ENCODE measurements at regions of chr12 and their contacts with region 1.

Region 1: DNA sequence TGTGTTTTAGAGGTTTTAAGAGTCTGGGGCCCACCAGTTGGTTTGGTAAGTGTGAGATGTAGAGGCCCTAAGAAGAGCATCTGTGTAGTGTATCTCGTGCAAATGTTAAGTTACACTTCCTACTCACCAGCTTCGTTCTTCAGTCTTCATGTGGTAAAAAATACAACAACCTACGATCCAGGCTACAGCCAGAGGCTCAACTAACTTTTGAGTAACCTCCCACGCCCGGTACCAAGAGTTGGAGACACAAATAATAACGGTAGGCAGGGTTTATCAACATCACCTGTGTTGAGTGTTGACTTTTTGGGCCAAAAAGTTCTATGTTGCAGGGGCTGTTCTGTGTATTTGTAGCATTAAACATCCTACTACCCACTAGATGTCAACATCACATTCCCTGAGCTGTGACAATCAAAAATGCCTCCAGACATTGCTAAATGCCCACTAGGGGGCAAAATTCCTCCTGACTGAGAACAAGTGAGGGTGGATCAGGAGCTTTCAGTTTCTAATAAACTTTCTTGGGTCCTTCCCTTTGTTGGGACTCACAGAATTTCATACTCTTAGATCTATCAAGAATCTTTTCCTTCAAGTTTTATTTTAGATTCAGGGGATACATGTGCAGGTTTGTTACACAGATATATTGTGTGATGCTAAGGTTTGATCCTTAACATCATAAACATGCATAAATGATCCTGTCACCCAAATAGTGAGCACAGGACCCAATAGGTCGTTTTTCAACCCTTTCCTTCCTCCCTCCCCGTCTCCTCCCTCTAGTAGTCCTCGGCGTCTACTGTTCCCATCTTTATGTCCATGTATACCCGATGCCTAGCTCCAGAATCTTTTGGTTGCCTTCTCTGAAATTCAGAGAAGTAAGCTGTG is 94.7 kb downstream of the SLC2A13 start:
- DNase-seq: peak; percentile 76
- ATAC-seq: peak; percentile 92
- H3K4me3 Mint-ChIP-seq: peak overlapping the region; percentile 56
- H3K27ac Mint-ChIP-seq: peak overlapping the region; percentile 4
- H3K4me1 Mint-ChIP-seq: peaks cover 26% of the 10 kb centered on the region
- H3K27me3 Mint-ChIP-seq: no peaks in the 10 kb centered on the region

Region 2: GRCh38 chr12:39990122-39991101 is 20.7 kb before region 1 on chr12:
- CTCF ChIA-PET with region 1: interaction called, 21 read pairs
- POLR2A ChIA-PET with region 1: no interaction called
- DNase-seq: peak; percentile 73
- ATAC-seq: peak; percentile 91
- H3K4me3 Mint-ChIP-seq: no peak overlapping the region
- H3K27ac Mint-ChIP-seq: no peak overlapping the region
- H3K4me1 Mint-ChIP-seq: no peaks in the 10 kb centered on the region
- H3K27me3 Mint-ChIP-seq: no peaks in the 10 kb centered on the region

Region 3: GRCh38 chr12:40028301-40028700 is 17.2 kb after region 1 on chr12:
- CTCF ChIA-PET with region 1: interaction called, 24 read pairs
- POLR2A ChIA-PET with region 1: no interaction called
- DNase-seq: no peak
- ATAC-seq: no peak
- H3K4me3 Mint-ChIP-seq: no peak overlapping the region
- H3K27ac Mint-ChIP-seq: no peak overlapping the region
- H3K4me1 Mint-ChIP-seq: peaks cover 3% of the 10 kb centered on the region
- H3K27me3 Mint-ChIP-seq: no peaks in the 10 kb centered on the region

Region 4: DNA sequence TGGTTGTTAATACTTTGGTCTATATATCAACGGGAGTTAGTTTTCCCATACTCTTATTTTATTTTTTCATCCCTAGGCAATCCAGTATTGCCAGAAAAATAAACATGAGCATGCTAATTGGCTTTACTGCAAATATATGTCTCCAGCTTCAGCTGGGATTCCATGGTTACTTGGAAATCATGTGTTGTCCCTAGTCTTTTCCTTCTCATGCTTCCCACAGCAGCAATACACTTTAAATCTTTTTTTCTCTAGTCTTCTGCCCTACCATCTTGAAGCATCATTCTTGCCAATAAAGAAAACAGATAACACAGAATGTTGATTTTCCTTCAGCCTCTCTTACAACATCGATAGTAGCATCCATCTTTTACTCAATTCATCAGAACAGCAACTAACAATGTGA is 34.5 kb after region 1 on chr12:
- CTCF ChIA-PET with region 1: no interaction called
- POLR2A ChIA-PET with region 1: no interaction called
- DNase-seq: no peak
- ATAC-seq: no peak
- H3K4me3 Mint-ChIP-seq: no peak overlapping the region
- H3K27ac Mint-ChIP-seq: no peak overlapping the region
- H3K4me1 Mint-ChIP-seq: no peaks in the 10 kb centered on the region
- H3K27me3 Mint-ChIP-seq: no peaks in the 10 kb centered on the region

Region 5: DNA sequence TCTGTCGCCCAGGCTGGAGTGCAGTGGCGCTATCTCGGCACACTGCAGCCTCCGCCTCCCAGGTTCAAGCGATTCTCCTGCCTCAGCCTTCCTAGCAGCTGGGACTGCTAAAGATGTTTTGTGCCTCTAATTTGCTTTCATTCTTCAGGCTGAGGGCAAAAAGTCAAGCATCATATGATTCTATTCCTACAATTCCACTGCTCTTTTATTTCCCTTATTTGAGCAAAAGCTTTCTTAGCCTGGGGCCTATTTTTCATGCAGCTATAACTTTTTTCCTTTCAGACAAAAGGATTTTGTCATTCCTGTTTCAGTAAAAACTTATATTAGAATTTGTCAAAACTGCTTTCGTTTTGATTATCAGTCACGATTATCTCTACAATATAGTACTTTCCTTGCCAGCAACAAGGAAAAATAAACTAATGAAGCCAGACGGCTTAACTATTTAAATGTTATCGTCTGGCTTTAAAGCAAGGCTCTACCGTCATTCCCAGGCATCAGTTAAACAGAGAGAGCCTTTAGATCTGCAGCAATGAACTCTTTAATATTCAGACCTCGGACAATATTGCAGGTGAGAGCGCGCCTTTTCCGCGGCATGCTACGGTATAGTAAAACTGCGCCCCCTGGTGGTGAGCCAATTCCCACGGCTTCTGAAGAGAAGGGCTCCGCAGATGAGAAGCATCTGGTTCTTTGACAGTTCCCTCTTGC is 96.1 kb after region 1 on chr12:
- CTCF ChIA-PET with region 1: interaction called, 121 read pairs
- POLR2A ChIA-PET with region 1: no interaction called
- DNase-seq: peak; percentile 93
- ATAC-seq: peak; percentile 34
- H3K4me3 Mint-ChIP-seq: peak overlapping the region; percentile 78
- H3K27ac Mint-ChIP-seq: no peak overlapping the region
- H3K4me1 Mint-ChIP-seq: peaks cover 32% of the 10 kb centered on the region
- H3K27me3 Mint-ChIP-seq: peaks cover 11% of the 10 kb centered on the region

Region 6: DNA sequence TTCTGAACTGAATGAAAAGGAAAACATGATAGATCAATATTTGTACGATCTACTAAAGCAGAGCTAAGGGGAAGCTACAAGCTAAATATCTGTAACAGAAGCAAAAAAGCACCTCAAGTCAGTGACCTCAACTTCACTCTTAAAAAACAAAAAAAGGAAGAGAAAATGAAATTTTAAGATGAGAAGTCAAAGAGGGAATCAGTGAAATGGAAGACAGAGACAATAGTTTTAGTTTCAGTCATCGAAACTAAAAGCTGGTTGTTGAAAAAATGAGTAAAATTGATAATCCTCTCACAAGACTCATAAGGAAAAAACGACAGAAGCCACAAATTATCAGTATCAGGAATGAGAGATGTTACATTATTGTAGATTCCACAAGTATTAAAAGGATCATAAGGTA is 106.7 kb after region 1 on chr12:
- CTCF ChIA-PET with region 1: interaction called, 10 read pairs
- POLR2A ChIA-PET with region 1: no interaction called
- DNase-seq: no peak
- ATAC-seq: no peak
- H3K4me3 Mint-ChIP-seq: no peak overlapping the region
- H3K27ac Mint-ChIP-seq: no peak overlapping the region
- H3K4me1 Mint-ChIP-seq: peaks cover 6% of the 10 kb centered on the region
- H3K27me3 Mint-ChIP-seq: peaks cover 16% of the 10 kb centered on the region